CD8-positive, alpha-beta T cell (primary cell): ENCODE measurements at regions of chr15 and their contacts with region 1.

Region 1: DNA sequence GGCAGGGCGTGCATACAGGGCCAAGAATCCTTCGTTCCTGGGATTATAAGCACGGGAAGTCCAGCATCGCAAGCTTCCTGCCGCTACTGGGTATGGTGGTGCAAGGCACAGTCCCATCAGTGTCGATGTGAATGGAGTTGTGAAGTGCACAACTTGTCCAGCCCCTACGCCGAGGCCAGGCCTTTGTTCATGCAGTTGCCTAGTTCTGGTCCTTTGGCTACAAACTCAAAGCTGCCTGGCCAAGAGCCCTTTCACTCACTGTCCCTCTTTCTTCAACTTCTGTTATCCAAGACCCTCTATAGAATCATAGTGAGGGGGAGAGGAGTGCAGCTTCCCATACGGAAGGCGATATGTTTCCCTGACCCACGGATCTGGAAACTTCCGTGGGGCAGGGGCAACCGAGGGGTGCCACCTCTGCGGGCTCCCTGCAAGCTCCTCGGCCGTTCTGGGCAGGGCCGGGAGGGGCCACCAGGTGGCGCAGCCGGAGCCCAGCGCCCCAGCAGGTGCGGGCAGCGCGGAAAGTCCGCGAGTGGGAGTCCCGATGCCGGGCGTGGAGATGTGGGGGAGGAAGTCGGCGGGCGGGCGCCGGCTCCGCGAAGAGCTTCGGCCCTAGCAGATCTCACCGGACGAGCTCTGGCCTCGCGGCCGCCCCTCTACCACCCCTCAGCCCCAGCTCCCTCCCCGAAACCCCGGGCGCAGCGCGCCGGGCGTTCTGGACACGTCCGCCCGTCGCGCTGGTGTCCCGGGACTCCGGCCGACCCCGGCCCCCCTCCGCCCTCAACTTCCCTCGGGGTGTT is 693 bp downstream of the RASGRP1 start:
- DNase-seq: peak; percentile 79 to 94 (median 89)
- ATAC-seq: peak; percentile 61
- H3K4me3 ChIP-seq: peak overlapping the region; percentile 90 to 96
- H3K4me3 Mint-ChIP-seq: peak overlapping the region; percentile 98
- H3K27ac ChIP-seq: peak overlapping the region; percentile 78 to 79
- H3K27ac Mint-ChIP-seq: peak overlapping the region; percentile 95
- H3K4me1 ChIP-seq: peaks cover 56% of the 10 kb centered on the region
- H3K4me1 Mint-ChIP-seq: peaks cover 66% of the 10 kb centered on the region
- H3K27me3 ChIP-seq: no peaks in the 10 kb centered on the region
- H3K27me3 Mint-ChIP-seq: no peaks in the 10 kb centered on the region
- CTCF ChIP-seq: peak; percentile 98

Region 2: DNA sequence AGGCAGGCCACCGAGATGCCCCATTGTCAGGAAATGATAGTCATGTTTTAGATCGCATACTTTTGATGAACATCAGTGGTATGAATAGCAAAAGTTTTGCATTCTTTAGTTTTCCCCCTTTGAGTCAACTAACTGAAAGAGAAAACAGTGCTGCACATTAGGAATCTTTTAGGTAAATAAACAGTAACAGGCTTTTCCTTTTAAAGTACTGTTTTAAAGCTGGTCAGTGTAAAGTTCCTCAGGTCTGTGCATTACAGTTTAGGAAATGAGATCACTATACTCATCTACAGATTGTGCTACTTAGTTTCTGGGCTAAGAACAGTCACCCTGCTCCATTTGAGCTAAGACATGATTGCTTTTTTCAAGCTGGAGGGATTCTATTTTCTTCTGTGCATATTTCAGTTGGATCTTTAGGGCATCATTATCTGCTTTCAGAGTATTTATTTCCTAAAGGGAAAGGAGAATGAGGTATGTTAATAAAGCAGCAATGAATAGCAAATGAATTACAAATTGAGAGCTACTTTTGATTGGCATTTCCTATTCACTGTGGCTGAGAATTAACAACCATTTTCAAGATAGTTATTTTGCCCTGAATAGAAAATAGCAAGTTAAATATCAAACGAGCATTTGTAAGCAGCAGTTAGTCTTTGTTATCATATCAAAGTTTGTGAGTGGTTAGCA is 73.5 kb before region 1 on chr15:
- CTCF ChIA-PET with region 1: interaction called, 7 read pairs
- POLR2A ChIA-PET with region 1: interaction called, 5 read pairs
- intact Hi-C with region 1: loop called in 1 of 2 experiments (anchors 2 kb)
- DNase-seq: no peak
- ATAC-seq: no peak
- H3K4me3 ChIP-seq: no peak overlapping the region
- H3K4me3 Mint-ChIP-seq: no peak overlapping the region
- H3K27ac ChIP-seq: peak overlapping the region in 1 of 2 experiments; percentile 17
- H3K27ac Mint-ChIP-seq: peak overlapping the region; percentile 66
- H3K4me1 ChIP-seq: peaks cover 14% of the 10 kb centered on the region
- H3K4me1 Mint-ChIP-seq: peaks cover 36% of the 10 kb centered on the region
- H3K27me3 ChIP-seq: no peaks in the 10 kb centered on the region
- H3K27me3 Mint-ChIP-seq: no peaks in the 10 kb centered on the region
- CTCF ChIP-seq: no peak

Region 3: GRCh38 chr15:38536201-38536676 is 27.7 kb before region 1 on chr15:
- CTCF ChIA-PET with region 1: interaction called, 36 read pairs
- POLR2A ChIA-PET with region 1: interaction called, 4 read pairs
- intact Hi-C with region 1: no loop called
- DNase-seq: no peak
- ATAC-seq: no peak
- H3K4me3 ChIP-seq: no peak overlapping the region
- H3K4me3 Mint-ChIP-seq: no peak overlapping the region
- H3K27ac ChIP-seq: peak overlapping the region in 1 of 2 experiments; percentile 30
- H3K27ac Mint-ChIP-seq: peak overlapping the region; percentile 89
- H3K4me1 ChIP-seq: peaks cover 96% of the 10 kb centered on the region
- H3K4me1 Mint-ChIP-seq: peaks cover 98% of the 10 kb centered on the region
- H3K27me3 ChIP-seq: no peaks in the 10 kb centered on the region
- H3K27me3 Mint-ChIP-seq: no peaks in the 10 kb centered on the region
- CTCF ChIP-seq: no peak

Region 4: DNA sequence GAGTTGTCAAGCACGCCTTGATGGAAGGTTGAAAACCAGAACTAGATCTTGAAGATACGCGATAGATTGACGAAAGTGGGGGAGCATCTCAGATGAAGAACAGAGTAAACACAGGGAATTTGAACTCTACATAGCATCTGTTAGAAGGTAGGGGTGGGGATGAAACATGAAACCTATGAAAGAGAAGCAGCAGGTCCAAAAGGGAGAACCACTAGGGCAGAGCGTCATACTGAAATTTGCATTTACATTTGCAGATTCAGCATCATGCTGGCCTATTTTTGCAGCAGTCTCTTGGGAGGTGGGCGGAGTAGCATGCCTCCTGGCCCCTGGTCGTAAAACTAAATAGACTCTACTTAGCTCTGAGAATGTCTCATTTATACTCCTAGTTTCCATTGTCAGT is 46.8 kb after region 1 on chr15:
- CTCF ChIA-PET with region 1: interaction called, 14 read pairs
- POLR2A ChIA-PET with region 1: interaction called, 10 read pairs
- intact Hi-C with region 1: loop called in 1 of 2 experiments (anchors 5 kb)
- DNase-seq: peak in 3 of 9 experiments; percentile 28 to 53 (median 28)
- ATAC-seq: peak; percentile 78
- H3K4me3 ChIP-seq: no peak overlapping the region
- H3K4me3 Mint-ChIP-seq: peak overlapping the region; percentile 13
- H3K27ac ChIP-seq: peak overlapping the region in 1 of 2 experiments; percentile 69
- H3K27ac Mint-ChIP-seq: peak overlapping the region; percentile 93
- H3K4me1 ChIP-seq: peaks cover 41% of the 10 kb centered on the region
- H3K4me1 Mint-ChIP-seq: peaks cover 54% of the 10 kb centered on the region
- H3K27me3 ChIP-seq: no peaks in the 10 kb centered on the region
- H3K27me3 Mint-ChIP-seq: no peaks in the 10 kb centered on the region
- CTCF ChIP-seq: no peak

Region 5: GRCh38 chr15:38652998-38653397 is 89.1 kb after region 1 on chr15:
- CTCF ChIA-PET with region 1: interaction called, 396 read pairs
- POLR2A ChIA-PET with region 1: interaction called, 73 read pairs
- intact Hi-C with region 1: loop called (anchors 1 kb)
- DNase-seq: peak; percentile 62 to 96 (median 80)
- ATAC-seq: peak; percentile 77
- H3K4me3 ChIP-seq: no peak overlapping the region
- H3K4me3 Mint-ChIP-seq: peak overlapping the region; percentile 56
- H3K27ac ChIP-seq: peak overlapping the region; percentile 59 to 60
- H3K27ac Mint-ChIP-seq: peak overlapping the region; percentile 96
- H3K4me1 ChIP-seq: peaks cover 74% of the 10 kb centered on the region
- H3K4me1 Mint-ChIP-seq: peaks cover 75% of the 10 kb centered on the region
- H3K27me3 ChIP-seq: no peaks in the 10 kb centered on the region
- H3K27me3 Mint-ChIP-seq: no peaks in the 10 kb centered on the region
- CTCF ChIP-seq: no peak

Region 6: GRCh38 chr15:38699633-38700230 is 135.8 kb after region 1 on chr15:
- CTCF ChIA-PET with region 1: interaction called, 88 read pairs
- POLR2A ChIA-PET with region 1: interaction called, 13 read pairs
- intact Hi-C with region 1: no loop called
- DNase-seq: peak; percentile 40 to 87 (median 71)
- ATAC-seq: peak; percentile 56
- H3K4me3 ChIP-seq: no peak overlapping the region
- H3K4me3 Mint-ChIP-seq: no peak overlapping the region
- H3K27ac ChIP-seq: no peak overlapping the region
- H3K27ac Mint-ChIP-seq: no peak overlapping the region
- H3K4me1 ChIP-seq: peaks cover 46% of the 10 kb centered on the region
- H3K4me1 Mint-ChIP-seq: peaks cover 51% of the 10 kb centered on the region
- H3K27me3 ChIP-seq: no peaks in the 10 kb centered on the region
- H3K27me3 Mint-ChIP-seq: no peaks in the 10 kb centered on the region
- CTCF ChIP-seq: peak; percentile 98